Posterior vena cava (tissue), 2 donors: ENCODE measurements at regions of chr15 and their contacts with region 1.

Region 1: GRCh38 chr15:62190274-62190673 is 25.2 kb upstream of the C2CD4B start:
- DNase-seq: no peak

Region 2: GRCh38 chr15:62417439-62417838 is 227.2 kb after region 1 on chr15:
- intact Hi-C with region 1: loop called in 1 of 2 experiments (anchors 5 kb)
- DNase-seq: no peak